Activated CD4-positive, alpha-beta T cell treated with anti-CD3 and anti-CD28 coated beads for 36 hours (primary cell): ENCODE measurements at regions of chr17 and their contacts with region 1.

Region 1: GRCh38 chr17:66310528-66311148 is 8.2 kb downstream of the PRKCA start:
- DNase-seq: peak; percentile 69
- ATAC-seq: peak; percentile 50
- H3K4me3 Mint-ChIP-seq: peak overlapping the region; percentile 5
- H3K27ac Mint-ChIP-seq: peak overlapping the region; percentile 100
- H3K4me1 Mint-ChIP-seq: peaks cover 93% of the 10 kb centered on the region
- H3K27me3 Mint-ChIP-seq: no peaks in the 10 kb centered on the region

Region 2: GRCh38 chr17:65941432-65941831 is 369.2 kb before region 1 on chr17:
- CTCF ChIA-PET with region 1: no interaction called
- POLR2A ChIA-PET with region 1: no interaction called
- intact Hi-C with region 1: no loop called
- DNase-seq: no peak
- ATAC-seq: no peak
- H3K4me3 Mint-ChIP-seq: no peak overlapping the region
- H3K27ac Mint-ChIP-seq: no peak overlapping the region
- H3K4me1 Mint-ChIP-seq: no peaks in the 10 kb centered on the region
- H3K27me3 Mint-ChIP-seq: peaks cover 2% of the 10 kb centered on the region

Region 3: GRCh38 chr17:66348584-66349165 is 38.0 kb after region 1 on chr17:
- CTCF ChIA-PET with region 1: interaction called, 3 read pairs
- POLR2A ChIA-PET with region 1: interaction called, 4 read pairs
- intact Hi-C with region 1: loop called (anchors 2 to 5 kb)
- DNase-seq: peak; percentile 55
- ATAC-seq: peak; percentile 82
- H3K4me3 Mint-ChIP-seq: no peak overlapping the region
- H3K27ac Mint-ChIP-seq: peak overlapping the region; percentile 78
- H3K4me1 Mint-ChIP-seq: peaks cover 73% of the 10 kb centered on the region
- H3K27me3 Mint-ChIP-seq: no peaks in the 10 kb centered on the region

Region 4: GRCh38 chr17:66403846-66404556 is 93.4 kb after region 1 on chr17:
- CTCF ChIA-PET with region 1: interaction called, 3 read pairs
- POLR2A ChIA-PET with region 1: interaction called, 5 read pairs
- intact Hi-C with region 1: loop called (anchors 1 to 2 kb)
- DNase-seq: no peak
- ATAC-seq: no peak
- H3K4me3 Mint-ChIP-seq: no peak overlapping the region
- H3K27ac Mint-ChIP-seq: peak overlapping the region; percentile 9
- H3K4me1 Mint-ChIP-seq: peaks cover 87% of the 10 kb centered on the region
- H3K27me3 Mint-ChIP-seq: no peaks in the 10 kb centered on the region

Region 5: GRCh38 chr17:66514227-66514806 is 203.7 kb after region 1 on chr17:
- CTCF ChIA-PET with region 1: no interaction called
- POLR2A ChIA-PET with region 1: no interaction called
- intact Hi-C with region 1: loop called (anchors 1 to 2 kb)
- DNase-seq: peak; percentile 55
- ATAC-seq: peak; percentile 85
- H3K4me3 Mint-ChIP-seq: no peak overlapping the region
- H3K27ac Mint-ChIP-seq: peak overlapping the region; percentile 74
- H3K4me1 Mint-ChIP-seq: peaks cover 87% of the 10 kb centered on the region
- H3K27me3 Mint-ChIP-seq: no peaks in the 10 kb centered on the region